SK-N-SH (cell line): ENCODE measurements at regions of chr3 and their contacts with region 1.

Region 1: GRCh38 chr3:18747383-18747782 is 322.2 kb upstream of the SATB1 start:
- DNase-seq: no peak
- H3K4me3 ChIP-seq: no peak overlapping the region
- H3K27ac ChIP-seq: no peak overlapping the region
- H3K4me1 ChIP-seq: no peaks in the 10 kb centered on the region
- H3K27me3 ChIP-seq: no peaks in the 10 kb centered on the region
- CTCF ChIP-seq: no peak
- EP300 ChIP-seq: no peak
- RAD21 ChIP-seq: no peak

Region 2: DNA sequence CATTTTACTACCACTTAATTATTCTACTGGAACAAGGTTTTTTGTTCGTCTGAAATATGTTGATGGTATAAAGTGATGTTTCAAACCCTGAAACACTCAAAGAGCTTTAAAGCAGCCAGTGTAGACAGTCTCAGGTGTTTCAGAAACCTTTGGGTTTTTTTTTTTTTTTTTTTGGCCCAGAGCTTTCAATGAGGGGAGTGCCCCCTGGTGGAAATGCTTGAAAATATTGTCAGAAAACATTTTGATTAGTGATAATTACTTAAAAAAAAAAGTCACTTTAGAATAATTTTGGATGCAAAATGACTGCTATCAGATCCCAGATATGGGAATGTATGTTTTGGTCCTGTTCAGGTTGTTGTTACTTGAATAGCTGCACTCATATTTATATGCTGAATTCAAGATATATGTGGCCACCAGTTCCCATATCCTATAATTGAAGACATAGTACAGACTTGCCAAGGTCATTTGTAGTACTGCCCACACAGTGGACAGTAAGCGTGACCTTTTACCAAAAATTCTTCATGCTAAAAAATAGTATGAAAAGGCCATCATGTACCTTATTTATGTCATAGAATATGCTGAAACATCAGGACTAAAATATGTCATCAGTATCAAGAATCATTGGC is 358.2 kb before region 1 on chr3:
- CTCF ChIA-PET with region 1: no interaction called
- POLR2A ChIA-PET with region 1: no interaction called
- DNase-seq: peak; percentile 10
- H3K4me3 ChIP-seq: no peak overlapping the region; a peak in 1 of 4 replicates
- H3K27ac ChIP-seq: peak overlapping the region in 1 of 2 experiments; percentile 75; a peak in 2 of 4 replicates
- H3K4me1 ChIP-seq: peaks cover 0 to 16% of the 10 kb centered on the region in 2 experiments; a peak in 2 of 4 replicates
- H3K27me3 ChIP-seq: no peaks in the 10 kb centered on the region
- CTCF ChIP-seq: peak; percentile 88
- EP300 ChIP-seq: no peak
- RAD21 ChIP-seq: peak; percentile 75

Region 3: DNA sequence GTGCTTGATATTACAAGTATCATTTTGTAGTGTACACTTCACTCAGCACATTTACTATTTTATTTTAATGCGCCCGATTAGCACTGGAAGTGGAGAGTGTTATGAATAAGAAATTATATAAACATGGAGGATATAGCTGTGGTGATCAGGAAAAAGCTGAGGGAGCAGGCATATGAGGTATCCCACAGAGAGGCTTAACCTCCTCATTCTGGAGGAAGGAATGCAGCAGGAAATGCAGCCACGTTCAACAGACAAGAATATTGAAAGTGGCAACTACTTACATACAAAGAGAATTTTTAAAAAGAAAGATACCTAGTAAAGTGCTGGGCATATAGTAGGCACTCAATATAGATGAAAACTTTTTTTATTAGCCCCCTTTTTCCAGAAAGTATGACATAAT is 156.3 kb before region 1 on chr3:
- CTCF ChIA-PET with region 1: no interaction called
- POLR2A ChIA-PET with region 1: no interaction called
- DNase-seq: no peak
- H3K4me3 ChIP-seq: no peak overlapping the region
- H3K27ac ChIP-seq: no peak overlapping the region
- H3K4me1 ChIP-seq: no peaks in the 10 kb centered on the region
- H3K27me3 ChIP-seq: no peaks in the 10 kb centered on the region
- CTCF ChIP-seq: no peak
- EP300 ChIP-seq: no peak
- RAD21 ChIP-seq: no peak

Region 4: GRCh38 chr3:18758047-18758704 is 10.8 kb after region 1 on chr3:
- CTCF ChIA-PET with region 1: interaction called, 26 read pairs
- POLR2A ChIA-PET with region 1: no interaction called
- DNase-seq: peak; percentile 27
- H3K4me3 ChIP-seq: no peak overlapping the region; a peak in 1 of 4 replicates
- H3K27ac ChIP-seq: no peak overlapping the region
- H3K4me1 ChIP-seq: no peaks in the 10 kb centered on the region; a peak in 1 of 4 replicates
- H3K27me3 ChIP-seq: no peaks in the 10 kb centered on the region
- CTCF ChIP-seq: peak; percentile 65
- EP300 ChIP-seq: no peak
- RAD21 ChIP-seq: peak; percentile 86